ENCODE measurements at regions of chr1 and their contacts with region 1.

Region 1: GRCh38 chr1:200669314-200670241 is at the start of gene DDX59:
- DNase-seq: peak; percentile 81 to 95 (median 85)
- ATAC-seq: peak; percentile 92
- H3K4me3 ChIP-seq: peak within 1 kb of the TSS; percentile 93
- H3K4me3 Mint-ChIP-seq: peak within 1 kb of the TSS; percentile 96 to 99 (median 98)
- H3K27ac ChIP-seq: peak within 1 kb of the TSS; percentile 98
- H3K27ac Mint-ChIP-seq: peak within 1 kb of the TSS; percentile 89 to 99 (median 97)
- H3K4me1 ChIP-seq: peaks cover 13 to 16% of the 10 kb centered on the region in 2 donors
- H3K4me1 Mint-ChIP-seq: peaks cover 20 to 60% (median 51%) of the 10 kb centered on the region in 7 donors
- H3K27me3 ChIP-seq: no peaks in the 10 kb centered on the region
- H3K27me3 Mint-ChIP-seq: no peaks in the 10 kb centered on the region
- total RNA-seq, gene DDX59: 20.6 to 41.3 (median 31.1) TPM

Region 2: GRCh38 chr1:200473698-200474371 is 195.7 kb before region 1 on chr1:
- CTCF ChIA-PET with region 1: no interaction called
- POLR2A ChIA-PET with region 1: no interaction called
- intact Hi-C with region 1: no loop called
- DNase-seq: no peak
- ATAC-seq: peak; percentile 26
- H3K4me3 ChIP-seq: no peak overlapping the region
- H3K4me3 Mint-ChIP-seq: peak overlapping the region in 1 of 10 donors; percentile 65
- H3K27ac ChIP-seq: no peak overlapping the region
- H3K27ac Mint-ChIP-seq: peak overlapping the region in 1 of 9 donors; percentile 71
- H3K4me1 ChIP-seq: peaks cover 0 to 8% of the 10 kb centered on the region in 2 donors
- H3K4me1 Mint-ChIP-seq: peaks cover 0 to 20% (median 0%) of the 10 kb centered on the region in 7 donors
- H3K27me3 ChIP-seq: no peaks in the 10 kb centered on the region
- H3K27me3 Mint-ChIP-seq: peaks cover 0 to 26% (median 7%) of the 10 kb centered on the region in 5 donors

Region 3: DNA sequence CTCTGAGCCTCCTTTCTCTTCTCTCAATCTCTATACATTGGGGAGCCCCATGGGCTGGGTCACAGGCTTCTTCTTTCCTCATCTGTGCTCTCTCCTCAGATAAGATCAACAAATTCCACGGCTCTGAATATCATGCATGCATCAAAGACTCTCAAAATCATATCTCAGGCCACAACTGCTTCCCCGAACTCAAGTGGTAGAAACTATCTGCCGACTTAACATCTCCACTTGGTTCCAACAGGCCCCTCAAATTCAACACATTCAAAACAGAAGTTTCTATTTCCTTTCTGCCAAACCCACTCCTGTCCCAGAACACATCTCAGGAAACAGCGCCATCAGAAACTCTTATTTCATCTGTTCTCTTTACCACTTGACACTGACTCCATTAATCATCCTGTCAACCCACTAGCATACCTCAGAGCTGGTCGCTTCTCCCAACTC is 16.5 kb before region 1 on chr1:
- CTCF ChIA-PET with region 1: no interaction called
- POLR2A ChIA-PET with region 1: no interaction called
- intact Hi-C with region 1: loop called in 1 of 2 experiments (anchors 2 kb)
- DNase-seq: no peak
- ATAC-seq: no peak
- H3K4me3 ChIP-seq: no peak overlapping the region
- H3K4me3 Mint-ChIP-seq: peak overlapping the region in 2 of 10 donors; percentile 1 to 28
- H3K27ac ChIP-seq: no peak overlapping the region
- H3K27ac Mint-ChIP-seq: peak overlapping the region; percentile 15 to 85 (median 76)
- H3K4me1 ChIP-seq: no peaks in the 10 kb centered on the region
- H3K4me1 Mint-ChIP-seq: peaks cover 8 to 32% (median 20%) of the 10 kb centered on the region in 7 donors
- H3K27me3 ChIP-seq: no peaks in the 10 kb centered on the region
- H3K27me3 Mint-ChIP-seq: no peaks in the 10 kb centered on the region

Region 4: GRCh38 chr1:200738740-200739498 is 69.3 kb after region 1 on chr1 and contains the start of gene CAMSAP2:
- CTCF ChIA-PET with region 1: interaction called, 4 read pairs
- POLR2A ChIA-PET with region 1: interaction called, 19 read pairs
- intact Hi-C with region 1: loop called (anchors 1 kb)
- DNase-seq: peak; percentile 43 to 76 (median 69)
- ATAC-seq: peak; percentile 80
- H3K4me3 ChIP-seq: peak within 1 kb of the TSS; percentile 74
- H3K4me3 Mint-ChIP-seq: peak within 1 kb of the TSS; percentile 85 to 99 (median 98)
- H3K27ac ChIP-seq: peak within 1 kb of the TSS; percentile 75
- H3K27ac Mint-ChIP-seq: peak within 1 kb of the TSS; percentile 78 to 97 (median 93)
- H3K4me1 ChIP-seq: peaks cover 5 to 23% of the 10 kb centered on the region in 2 donors
- H3K4me1 Mint-ChIP-seq: peaks cover 16 to 49% (median 41%) of the 10 kb centered on the region in 7 donors
- H3K27me3 ChIP-seq: no peaks in the 10 kb centered on the region
- H3K27me3 Mint-ChIP-seq: peaks cover 0 to 45% (median 0%) of the 10 kb centered on the region in 5 donors
- total RNA-seq, gene CAMSAP2: 0.36 to 11.4 (median 5.5) TPM

Measured in naive thymus-derived CD4-positive, alpha-beta T cell (primary cell).